Heart right ventricle (tissue), 16 donors: ENCODE measurements at regions of chr10 and their contacts with region 1.

Region 1: GRCh38 chr10:33674986-33675599 is 340.6 kb upstream of the NRP1 start:
- DNase-seq: peak in 1 of 2 donors; percentile 37
- ATAC-seq: peak in 7 of 8 donors; percentile 37 to 91 (median 79)
- H3K4me3 ChIP-seq: peak overlapping the region in 5 of 10 donors; percentile 19 to 33 (median 29)
- H3K27ac ChIP-seq: peak overlapping the region in 9 of 10 donors; percentile 50 to 86 (median 63)
- H3K4me1 ChIP-seq: peaks cover 0 to 34% (median 9%) of the 10 kb centered on the region in 9 donors
- H3K27me3 ChIP-seq: no peaks in the 10 kb centered on the region
- CTCF ChIP-seq: no peak

Region 2: DNA sequence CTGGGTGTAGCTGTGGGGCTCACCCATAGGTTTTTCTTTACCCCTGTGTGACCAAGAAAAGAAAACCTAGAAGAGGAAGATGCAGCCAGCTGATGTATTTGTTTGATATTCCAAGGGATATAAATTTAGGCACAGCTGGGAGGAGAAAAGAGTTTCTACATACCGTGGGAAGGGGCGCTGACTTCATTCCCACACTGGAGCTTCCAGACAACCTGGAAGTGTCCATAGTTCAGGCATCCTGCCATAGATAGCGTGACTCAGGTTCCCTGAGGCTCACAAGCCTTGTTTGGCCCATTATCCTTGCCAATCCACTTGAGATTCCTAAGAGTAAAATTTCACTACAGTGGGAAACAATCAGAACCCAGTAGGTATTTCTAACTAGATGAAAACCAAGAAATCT is 31.1 kb after region 1 on chr10:
- intact Hi-C with region 1: no loop called
- DNase-seq: peak in 1 of 2 donors; percentile 23
- ATAC-seq: peak in 3 of 8 donors; percentile 68 to 83 (median 77)
- H3K4me3 ChIP-seq: no peak overlapping the region
- H3K27ac ChIP-seq: peak overlapping the region in 4 of 10 donors; percentile 19 to 48 (median 31)
- H3K4me1 ChIP-seq: peaks cover 0 to 33% (median 21%) of the 10 kb centered on the region in 9 donors
- H3K27me3 ChIP-seq: no peaks in the 10 kb centered on the region
- CTCF ChIP-seq: no peak

Region 3: GRCh38 chr10:33772370-33773252 is 97.5 kb after region 1 on chr10:
- intact Hi-C with region 1: loop called in 2 of 10 experiments (anchors 5 to 10 kb)
- DNase-seq: peak in 1 of 2 donors; percentile 57
- ATAC-seq: peak in 7 of 8 donors; percentile 71 to 95 (median 92)
- H3K4me3 ChIP-seq: peak overlapping the region in 2 of 10 donors; percentile 9 to 21
- H3K27ac ChIP-seq: peak overlapping the region in 5 of 10 donors; percentile 18 to 68 (median 60)
- H3K4me1 ChIP-seq: peaks cover 0 to 22% (median 14%) of the 10 kb centered on the region in 9 donors
- H3K27me3 ChIP-seq: no peaks in the 10 kb centered on the region
- CTCF ChIP-seq: no peak